Common myeloid progenitor, CD34-positive (primary cell): ENCODE measurements at regions of chr6 and their contacts with region 1.

Region 1: GRCh38 chr6:142842418-142843261 is 102.3 kb downstream of the HIVEP2 start:
- DNase-seq: peak; percentile 38 to 82 (median 76)
- H3K4me3 ChIP-seq: peak overlapping the region in 6 of 7 experiments; percentile 4 to 66 (median 26)
- H3K27ac ChIP-seq: peak overlapping the region in 1 of 2 experiments; percentile 36
- H3K4me1 ChIP-seq: peaks cover 36 to 48% (median 41%) of the 10 kb centered on the region in 4 experiments
- H3K27me3 ChIP-seq: no peaks in the 10 kb centered on the region

Region 2: GRCh38 chr6:142853261-142854180 is 10.9 kb after region 1 on chr6:
- CTCF ChIA-PET with region 1: interaction called, 14 read pairs
- POLR2A ChIA-PET with region 1: no interaction called
- DNase-seq: no peak
- H3K4me3 ChIP-seq: no peak overlapping the region
- H3K27ac ChIP-seq: no peak overlapping the region
- H3K4me1 ChIP-seq: peaks cover 23 to 50% (median 30%) of the 10 kb centered on the region in 4 experiments
- H3K27me3 ChIP-seq: no peaks in the 10 kb centered on the region

Region 3: GRCh38 chr6:143579703-143580102 is 737.1 kb after region 1 on chr6:
- CTCF ChIA-PET with region 1: no interaction called
- POLR2A ChIA-PET with region 1: no interaction called
- DNase-seq: no peak
- H3K4me3 ChIP-seq: no peak overlapping the region
- H3K27ac ChIP-seq: no peak overlapping the region
- H3K4me1 ChIP-seq: no peaks in the 10 kb centered on the region
- H3K27me3 ChIP-seq: no peaks in the 10 kb centered on the region